Activated CD4-positive, alpha-beta memory T cell treated with anti-CD3 and anti-CD28 coated beads, Interleukin-2, amount 10 ng/mL, durations not matched to agents 7 days and 5 days (primary cell): ENCODE measurements at regions of chr6 and their contacts with region 1.

Region 1: DNA sequence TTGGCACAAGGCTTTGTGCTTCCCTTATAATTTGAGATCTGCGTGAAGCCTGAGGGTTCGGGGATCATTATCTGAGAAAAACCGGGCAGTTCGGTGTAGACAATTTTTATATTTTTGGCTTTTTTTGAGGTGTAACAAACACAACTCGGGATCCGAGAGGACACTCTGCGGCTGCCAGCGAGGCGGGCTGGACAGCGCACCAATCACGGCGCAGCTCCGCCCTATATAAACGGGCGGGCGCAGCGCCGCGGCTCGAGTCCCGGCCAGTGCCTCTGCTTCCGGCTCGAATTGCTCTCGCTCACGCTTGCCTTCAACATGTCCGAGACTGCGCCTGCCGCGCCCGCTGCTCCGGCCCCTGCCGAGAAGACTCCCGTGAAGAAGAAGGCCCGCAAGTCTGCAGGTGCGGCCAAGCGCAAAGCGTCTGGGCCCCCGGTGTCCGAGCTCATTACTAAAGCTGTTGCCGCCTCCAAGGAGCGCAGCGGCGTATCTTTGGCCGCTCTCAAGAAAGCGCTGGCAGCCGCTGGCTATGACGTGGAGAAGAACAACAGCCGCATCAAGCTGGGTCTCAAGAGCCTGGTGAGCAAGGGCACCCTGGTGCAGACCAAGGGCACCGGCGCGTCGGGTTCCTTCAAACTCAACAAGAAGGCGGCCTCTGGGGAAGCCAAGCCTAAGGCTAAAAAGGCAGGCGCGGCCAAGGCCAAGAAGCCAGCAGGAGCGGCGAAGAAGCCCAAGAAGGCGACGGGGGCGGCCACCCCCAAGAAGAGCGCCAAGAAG is 69.0 kb downstream of the HFE start:
- DNase-seq: peak; percentile 91
- H3K4me3 Mint-ChIP-seq: peak overlapping the region; percentile 95
- H3K27ac Mint-ChIP-seq: peak overlapping the region; percentile 98
- H3K4me1 Mint-ChIP-seq: peaks cover 45% of the 10 kb centered on the region
- H3K27me3 Mint-ChIP-seq: no peaks in the 10 kb centered on the region

Region 2: DNA sequence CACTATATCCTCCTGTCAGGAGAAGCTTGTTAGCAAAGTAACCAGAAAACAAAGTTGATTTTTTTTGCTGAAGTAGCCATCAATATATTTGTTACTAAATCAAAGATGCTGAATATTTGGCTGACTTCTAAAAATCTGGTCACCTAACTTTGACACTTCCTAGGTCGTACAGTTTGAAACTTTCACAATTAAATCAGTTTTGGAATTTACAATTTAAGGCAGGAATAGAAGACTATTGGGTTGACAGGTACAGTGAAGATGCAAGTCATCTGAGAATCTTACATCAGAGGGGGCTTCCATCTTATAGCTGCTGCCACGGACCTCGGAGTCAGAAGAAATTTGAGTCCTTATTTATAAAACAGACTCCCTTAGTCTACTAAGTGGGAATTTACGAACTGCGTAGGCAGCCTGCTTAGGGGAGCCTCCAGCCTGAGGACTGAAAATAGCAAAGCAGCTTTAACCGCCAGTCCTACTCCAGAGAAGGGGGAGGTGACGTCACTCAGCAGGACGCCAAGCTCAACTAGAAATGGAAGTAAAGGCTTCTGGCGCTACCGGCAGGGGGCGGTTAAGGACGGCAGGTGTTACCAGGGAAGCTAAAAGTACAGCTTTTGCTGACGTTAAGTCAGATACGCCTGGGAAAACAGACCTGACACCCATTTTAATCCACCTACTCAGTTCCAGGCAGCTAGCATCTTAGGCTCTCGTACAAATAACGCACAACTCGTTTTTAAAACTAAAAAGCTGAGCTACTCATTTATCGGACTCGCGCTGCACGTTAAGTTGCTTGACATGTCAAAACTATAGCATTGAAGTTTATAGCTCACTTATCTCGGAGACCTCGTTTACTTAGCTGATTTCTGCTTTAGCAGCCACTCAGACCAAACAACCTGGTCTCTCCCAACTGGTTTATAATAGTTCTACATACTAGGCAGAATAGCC is 130.1 kb before region 1 on chr6:
- CTCF ChIA-PET with region 1: no interaction called
- POLR2A ChIA-PET with region 1: interaction called, 281 read pairs
- DNase-seq: peak; percentile 94
- H3K4me3 Mint-ChIP-seq: peak overlapping the region; percentile 75
- H3K27ac Mint-ChIP-seq: peak overlapping the region; percentile 100
- H3K4me1 Mint-ChIP-seq: peaks cover 84% of the 10 kb centered on the region
- H3K27me3 Mint-ChIP-seq: peaks cover 2% of the 10 kb centered on the region

Region 3: DNA sequence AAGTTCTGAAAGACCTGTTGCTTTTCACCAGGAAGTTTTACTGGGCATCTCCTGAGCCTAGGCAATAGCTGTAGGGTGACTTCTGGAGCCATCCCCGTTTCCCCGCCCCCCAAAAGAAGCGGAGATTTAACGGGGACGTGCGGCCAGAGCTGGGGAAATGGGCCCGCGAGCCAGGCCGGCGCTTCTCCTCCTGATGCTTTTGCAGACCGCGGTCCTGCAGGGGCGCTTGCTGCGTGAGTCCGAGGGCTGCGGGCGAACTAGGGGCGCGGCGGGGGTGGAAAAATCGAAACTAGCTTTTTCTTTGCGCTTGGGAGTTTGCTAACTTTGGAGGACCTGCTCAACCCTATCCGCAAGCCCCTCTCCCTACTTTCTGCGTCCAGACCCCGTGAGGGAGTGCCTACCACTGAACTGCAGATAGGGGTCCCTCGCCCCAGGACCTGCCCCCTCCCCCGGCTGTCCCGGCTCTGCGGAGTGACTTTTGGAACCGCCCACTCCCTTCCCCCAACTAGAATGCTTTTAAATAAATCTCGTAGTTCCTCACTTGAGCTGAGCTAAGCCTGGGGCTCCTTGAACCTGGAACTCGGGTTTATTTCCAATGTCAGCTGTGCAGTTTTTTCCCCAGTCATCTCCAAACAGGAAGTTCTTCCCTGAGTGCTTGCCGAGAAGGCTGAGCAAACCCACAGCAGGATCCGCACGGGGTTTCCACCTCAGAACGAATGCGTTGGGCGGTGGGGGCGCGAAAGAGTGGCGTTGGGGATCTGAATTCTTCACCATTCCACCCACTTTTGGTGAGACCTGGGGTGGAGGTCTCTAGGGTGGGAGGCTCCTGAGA is 68.8 kb before region 1 on chr6 and contains the start of gene HFE:
- CTCF ChIA-PET with region 1: no interaction called
- POLR2A ChIA-PET with region 1: interaction called, 31 read pairs
- DNase-seq: peak; percentile 37
- H3K4me3 Mint-ChIP-seq: peak within 1 kb of the TSS; percentile 77
- H3K27ac Mint-ChIP-seq: peak within 1 kb of the TSS; percentile 47
- H3K4me1 Mint-ChIP-seq: peaks cover 37% of the 10 kb centered on the region
- H3K27me3 Mint-ChIP-seq: peaks cover 8% of the 10 kb centered on the region
- total RNA-seq, gene HFE: 3.1 to 3.4 TPM

Region 4: GRCh38 chr6:26175428-26176181 is 19.3 kb after region 1 on chr6:
- CTCF ChIA-PET with region 1: interaction called, 12 read pairs
- POLR2A ChIA-PET with region 1: interaction called, 617 read pairs
- DNase-seq: peak; percentile 68
- H3K4me3 Mint-ChIP-seq: peak overlapping the region; percentile 5
- H3K27ac Mint-ChIP-seq: peak overlapping the region; percentile 50
- H3K4me1 Mint-ChIP-seq: peaks cover 44% of the 10 kb centered on the region
- H3K27me3 Mint-ChIP-seq: no peaks in the 10 kb centered on the region

Region 5: GRCh38 chr6:26216356-26216885 is 60.2 kb after region 1 on chr6:
- CTCF ChIA-PET with region 1: interaction called, 4 read pairs
- POLR2A ChIA-PET with region 1: interaction called, 203 read pairs
- DNase-seq: peak; percentile 90
- H3K4me3 Mint-ChIP-seq: no peak overlapping the region
- H3K27ac Mint-ChIP-seq: no peak overlapping the region
- H3K4me1 Mint-ChIP-seq: peaks cover 28% of the 10 kb centered on the region
- H3K27me3 Mint-ChIP-seq: no peaks in the 10 kb centered on the region

Region 6: DNA sequence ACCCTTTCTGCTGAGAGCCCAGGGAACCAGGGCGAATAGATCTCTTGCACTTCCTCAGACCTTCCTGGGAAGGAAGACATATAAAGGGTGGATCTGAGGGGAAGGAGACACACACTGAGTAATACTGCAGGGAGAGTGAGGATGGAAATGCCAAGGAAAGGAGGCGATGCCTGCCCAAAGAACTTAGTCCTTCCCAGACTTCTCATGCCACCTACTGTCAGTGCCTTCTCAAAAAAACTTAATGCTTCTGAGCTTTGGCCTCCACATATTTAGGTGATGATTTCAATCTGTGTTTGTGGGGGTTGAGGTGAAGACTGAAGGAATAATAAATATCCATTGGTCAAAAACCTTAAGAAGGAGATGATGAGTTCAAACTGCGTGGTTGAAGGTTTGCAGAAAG is 255.5 kb after region 1 on chr6:
- CTCF ChIA-PET with region 1: no interaction called
- POLR2A ChIA-PET with region 1: no interaction called
- DNase-seq: no peak
- H3K4me3 Mint-ChIP-seq: no peak overlapping the region
- H3K27ac Mint-ChIP-seq: no peak overlapping the region
- H3K4me1 Mint-ChIP-seq: peaks cover 7% of the 10 kb centered on the region
- H3K27me3 Mint-ChIP-seq: no peaks in the 10 kb centered on the region

Region 7: DNA sequence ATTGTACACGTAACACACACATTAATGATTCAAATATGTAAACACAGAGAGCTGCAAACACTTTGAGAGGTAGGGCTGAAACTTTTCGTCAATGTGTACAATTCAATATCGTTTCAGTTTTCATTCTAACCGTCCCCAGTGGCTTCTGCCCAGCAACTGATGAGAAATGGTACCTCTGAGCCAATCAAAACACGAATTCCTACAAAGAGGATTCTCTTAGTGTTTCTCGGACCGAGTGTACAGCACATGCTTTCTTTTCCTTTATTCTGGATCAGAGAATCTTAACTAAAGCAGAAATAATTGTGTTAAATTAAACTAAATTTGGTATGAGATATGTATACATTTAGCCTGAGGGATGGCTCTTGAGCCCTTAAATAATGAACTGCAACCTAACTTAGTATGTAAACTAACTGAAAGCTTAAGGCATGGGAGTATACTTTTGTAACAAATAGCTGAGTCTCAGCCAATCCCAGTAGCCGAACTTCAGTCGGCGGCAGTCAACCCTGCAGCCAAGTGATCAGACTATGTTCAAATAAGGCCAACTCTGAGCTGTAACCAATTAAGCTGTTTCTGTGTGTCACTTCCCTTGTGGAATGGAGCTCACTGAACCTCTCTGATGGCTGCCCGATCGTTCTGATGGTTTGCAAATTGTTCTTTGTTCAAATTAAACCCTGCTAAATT is 317.6 kb after region 1 on chr6:
- CTCF ChIA-PET with region 1: no interaction called
- POLR2A ChIA-PET with region 1: interaction called, 10 read pairs
- DNase-seq: peak; percentile 86
- H3K4me3 Mint-ChIP-seq: peak overlapping the region; percentile 99
- H3K27ac Mint-ChIP-seq: peak overlapping the region; percentile 100
- H3K4me1 Mint-ChIP-seq: peaks cover 36% of the 10 kb centered on the region
- H3K27me3 Mint-ChIP-seq: no peaks in the 10 kb centered on the region

Region 8: DNA sequence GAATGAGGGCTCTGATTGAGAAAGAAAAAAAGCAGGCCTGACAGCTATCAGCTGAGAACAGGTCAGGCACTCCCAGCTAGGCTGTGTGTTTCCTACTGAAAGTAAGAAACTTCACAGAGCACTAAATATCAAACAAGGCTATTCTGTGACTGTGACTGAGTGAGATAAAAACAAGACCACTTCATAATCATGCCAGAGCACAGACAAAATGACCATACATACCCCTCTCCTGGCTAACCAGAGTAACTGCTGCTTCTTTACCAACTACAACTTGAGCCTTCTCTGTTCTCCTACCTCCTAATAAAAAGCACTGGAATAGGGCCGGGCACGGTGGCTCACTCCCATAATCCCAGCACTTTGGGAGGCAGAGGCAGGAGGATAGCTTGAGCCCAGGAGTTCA is 337.0 kb after region 1 on chr6:
- CTCF ChIA-PET with region 1: no interaction called
- POLR2A ChIA-PET with region 1: no interaction called
- DNase-seq: no peak
- H3K4me3 Mint-ChIP-seq: no peak overlapping the region
- H3K27ac Mint-ChIP-seq: no peak overlapping the region
- H3K4me1 Mint-ChIP-seq: peaks cover 26% of the 10 kb centered on the region
- H3K27me3 Mint-ChIP-seq: peaks cover 4% of the 10 kb centered on the region

Region 9: DNA sequence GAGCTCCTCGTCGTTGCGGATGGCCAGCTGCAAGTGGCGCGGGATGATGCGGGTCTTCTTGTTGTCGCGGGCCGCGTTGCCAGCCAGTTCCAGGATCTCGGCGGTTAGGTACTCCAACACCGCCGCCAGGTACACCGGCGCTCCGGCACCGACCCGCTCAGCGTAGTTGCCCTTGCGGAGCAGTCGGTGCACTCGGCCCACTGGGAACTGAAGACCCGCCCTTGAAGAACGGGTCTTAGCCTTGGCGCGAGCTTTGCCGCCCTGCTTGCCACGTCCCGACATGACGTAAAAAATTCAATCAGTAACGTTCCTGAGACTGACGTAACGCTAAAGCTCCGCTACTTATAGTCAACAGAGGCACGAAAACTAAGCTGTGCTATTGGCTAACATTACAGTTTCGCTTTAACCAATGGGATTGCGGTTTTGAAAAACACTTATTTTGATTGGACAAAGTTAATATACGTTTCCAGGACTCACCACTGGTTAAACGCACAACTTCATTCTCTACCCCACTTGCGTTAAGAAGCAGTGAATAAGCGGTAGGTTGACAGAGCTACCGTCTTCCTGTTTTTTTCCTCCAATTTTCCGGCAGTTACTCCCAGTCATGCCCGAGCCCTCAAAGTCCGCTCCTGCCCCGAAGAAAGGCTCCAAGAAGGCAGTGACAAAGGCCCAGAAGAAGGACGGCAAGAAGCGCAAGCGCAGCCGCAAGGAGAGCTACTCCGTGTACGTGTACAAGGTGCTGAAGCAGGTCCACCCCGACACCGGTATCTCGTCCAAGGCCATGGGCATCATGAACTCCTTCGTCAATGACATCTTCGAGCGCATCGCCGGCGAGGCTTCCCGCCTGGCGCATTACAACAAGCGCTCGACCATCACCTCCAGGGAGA is 1682.0 kb after region 1 on chr6:
- CTCF ChIA-PET with region 1: no interaction called
- POLR2A ChIA-PET with region 1: interaction called, 33 read pairs
- DNase-seq: peak; percentile 90
- H3K4me3 Mint-ChIP-seq: no peak overlapping the region
- H3K27ac Mint-ChIP-seq: no peak overlapping the region
- H3K4me1 Mint-ChIP-seq: peaks cover 31% of the 10 kb centered on the region
- H3K27me3 Mint-ChIP-seq: no peaks in the 10 kb centered on the region